PC-9 (cell line): ENCODE measurements at regions of chr14 and their contacts with region 1.

Region 1: DNA sequence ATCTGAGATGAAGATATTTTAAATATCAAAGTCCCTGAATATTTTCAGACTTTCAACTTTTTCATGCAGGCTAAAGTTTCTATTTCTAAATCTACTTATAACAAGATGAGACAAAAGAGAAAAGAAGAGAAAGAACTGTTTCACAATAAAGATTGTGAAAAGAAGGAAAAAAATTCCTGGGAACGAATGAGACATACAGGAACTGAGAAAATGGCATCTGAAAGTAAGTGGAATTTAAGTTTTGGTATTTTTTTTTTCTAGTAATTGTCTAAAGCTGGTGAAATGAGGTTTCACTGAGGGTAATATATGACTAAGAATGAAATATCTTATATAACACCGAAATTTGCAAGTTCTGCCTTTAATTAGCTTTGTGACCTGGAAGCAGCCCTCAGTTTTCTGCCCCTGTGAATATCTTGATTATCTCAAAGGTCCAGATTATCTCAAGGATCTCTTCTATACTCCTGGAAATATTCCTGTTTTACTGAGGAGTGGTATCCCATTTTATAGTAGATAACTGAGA is 55.7 kb upstream of the PRPF39 start:
- DNase-seq: no peak
- H3K4me3 ChIP-seq: no peak overlapping the region
- H3K27ac ChIP-seq: no peak overlapping the region
- H3K4me1 ChIP-seq: no peaks in the 10 kb centered on the region
- H3K27me3 ChIP-seq: no peaks in the 10 kb centered on the region
- CTCF ChIP-seq: no peak

Region 2: DNA sequence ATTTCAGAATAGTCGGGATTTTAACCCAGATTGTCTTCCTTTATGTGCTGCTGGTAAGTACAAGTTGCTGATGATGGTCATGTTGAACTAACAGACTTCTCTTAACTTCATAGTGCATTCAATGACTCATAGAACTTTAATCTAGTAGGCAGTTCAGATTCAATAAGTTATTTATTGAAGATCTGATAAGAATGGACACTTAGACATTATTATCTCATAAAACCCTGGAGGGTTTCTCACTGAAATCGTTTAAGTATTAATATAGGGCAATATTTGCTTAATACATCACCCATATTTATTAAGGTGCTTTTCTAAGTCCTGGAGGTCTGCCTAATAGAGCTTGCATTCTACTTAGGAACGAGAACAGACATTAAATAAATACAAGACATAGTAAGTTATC is 32.3 kb before region 1 on chr14:
- CTCF ChIA-PET with region 1: interaction called, 13 read pairs
- POLR2A ChIA-PET with region 1: no interaction called
- intact Hi-C with region 1: no loop called
- DNase-seq: no peak
- H3K4me3 ChIP-seq: no peak overlapping the region
- H3K27ac ChIP-seq: no peak overlapping the region
- H3K4me1 ChIP-seq: no peaks in the 10 kb centered on the region
- H3K27me3 ChIP-seq: no peaks in the 10 kb centered on the region
- CTCF ChIP-seq: no peak

Region 3: GRCh38 chr14:45065540-45065939 is 37.4 kb after region 1 on chr14:
- CTCF ChIA-PET with region 1: no interaction called
- POLR2A ChIA-PET with region 1: no interaction called
- intact Hi-C with region 1: no loop called
- DNase-seq: no peak
- H3K4me3 ChIP-seq: no peak overlapping the region
- H3K27ac ChIP-seq: no peak overlapping the region
- H3K4me1 ChIP-seq: no peaks in the 10 kb centered on the region
- H3K27me3 ChIP-seq: no peaks in the 10 kb centered on the region
- CTCF ChIP-seq: no peak